ENCODE measurements at regions of chr3 and their contacts with region 1.

Region 1: DNA sequence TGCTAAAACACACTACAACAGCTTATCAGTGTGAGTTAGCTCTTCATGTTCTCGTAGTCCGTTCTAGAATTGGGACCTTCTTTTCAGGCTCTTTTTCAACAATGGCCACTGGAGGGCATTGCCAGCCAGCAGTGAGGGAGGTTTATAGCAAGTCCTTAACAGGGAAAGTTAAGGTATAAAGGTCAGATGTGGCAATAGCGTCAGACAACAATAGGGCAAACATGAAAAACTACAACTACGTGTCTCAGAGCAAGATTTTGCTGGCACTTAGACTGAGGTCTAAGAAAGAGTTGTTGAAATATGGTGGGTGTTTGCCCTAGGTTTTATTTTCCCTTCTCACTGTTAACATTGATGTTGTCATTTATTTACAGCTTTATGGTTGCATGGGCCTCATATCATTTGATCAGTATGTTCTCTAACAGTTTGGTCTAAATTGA is 161.4 kb downstream of the GMNC start:
- DNase-seq: peak; percentile 65 to 81
- H3K4me3 ChIP-seq: no peak overlapping the region
- H3K27ac ChIP-seq: no peak overlapping the region
- H3K4me1 ChIP-seq: peaks cover 21% of the 10 kb centered on the region; the same call in 1 of the 2 replicates
- H3K27me3 ChIP-seq: no peaks in the 10 kb centered on the region
- CTCF ChIP-seq: peak; percentile 87

Region 2: DNA sequence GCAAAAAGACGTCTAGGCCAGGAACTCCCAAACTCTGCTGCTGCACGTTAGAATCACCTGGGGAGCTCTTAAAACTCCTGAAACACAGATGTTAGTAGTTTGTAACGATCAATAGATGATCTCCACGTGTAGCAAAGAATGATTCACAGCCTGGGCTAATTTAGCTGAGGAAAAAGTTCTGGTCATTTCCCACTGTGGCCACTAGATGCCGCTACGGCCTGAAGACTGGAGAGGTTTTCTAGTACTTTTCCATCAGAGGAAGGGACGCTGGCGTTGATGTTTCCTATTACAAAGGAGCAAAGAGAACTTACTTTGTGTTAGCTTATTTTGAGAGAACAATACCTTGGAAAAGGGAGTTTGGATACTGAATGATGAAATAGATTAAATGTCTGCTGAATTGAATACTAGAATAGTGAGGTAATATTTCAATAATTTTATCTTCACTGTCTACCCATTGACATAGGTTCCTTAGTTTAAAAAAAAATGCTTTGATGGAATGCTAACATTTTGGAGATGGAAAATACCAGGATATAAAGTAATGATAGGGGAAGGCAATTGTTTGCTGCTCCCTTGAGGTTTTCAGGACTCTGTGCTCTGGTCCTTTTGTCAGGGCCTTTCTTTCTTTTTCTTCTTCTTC is 739.5 kb before region 1 on chr3:
- CTCF ChIA-PET with region 1: interaction called, 5 read pairs
- POLR2A ChIA-PET with region 1: no interaction called
- intact Hi-C with region 1: loop called (anchors 1 kb)
- DNase-seq: peak; percentile 79 to 85
- H3K4me3 ChIP-seq: no peak overlapping the region
- H3K27ac ChIP-seq: no peak overlapping the region
- H3K4me1 ChIP-seq: peaks cover 7% of the 10 kb centered on the region
- H3K27me3 ChIP-seq: no peaks in the 10 kb centered on the region
- CTCF ChIP-seq: peak; percentile 100

Region 3: GRCh38 chr3:190424478-190425439 is 276.4 kb before region 1 on chr3:
- CTCF ChIA-PET with region 1: interaction called, 10 read pairs
- POLR2A ChIA-PET with region 1: no interaction called
- intact Hi-C with region 1: loop called (anchors 2 kb)
- DNase-seq: peak; percentile 70 to 73
- H3K4me3 ChIP-seq: no peak overlapping the region
- H3K27ac ChIP-seq: no peak overlapping the region
- H3K4me1 ChIP-seq: no peaks in the 10 kb centered on the region
- H3K27me3 ChIP-seq: no peaks in the 10 kb centered on the region
- CTCF ChIP-seq: peak; percentile 95

Region 4: GRCh38 chr3:190566043-190566933 is 134.8 kb before region 1 on chr3:
- CTCF ChIA-PET with region 1: no interaction called
- POLR2A ChIA-PET with region 1: interaction called, 5 read pairs
- intact Hi-C with region 1: loop called (anchors 1 kb)
- DNase-seq: peak; percentile 94 to 100
- H3K4me3 ChIP-seq: no peak overlapping the region
- H3K27ac ChIP-seq: peak overlapping the region; percentile 82
- H3K4me1 ChIP-seq: peaks cover 33% of the 10 kb centered on the region
- H3K27me3 ChIP-seq: no peaks in the 10 kb centered on the region
- CTCF ChIP-seq: no peak

Region 5: DNA sequence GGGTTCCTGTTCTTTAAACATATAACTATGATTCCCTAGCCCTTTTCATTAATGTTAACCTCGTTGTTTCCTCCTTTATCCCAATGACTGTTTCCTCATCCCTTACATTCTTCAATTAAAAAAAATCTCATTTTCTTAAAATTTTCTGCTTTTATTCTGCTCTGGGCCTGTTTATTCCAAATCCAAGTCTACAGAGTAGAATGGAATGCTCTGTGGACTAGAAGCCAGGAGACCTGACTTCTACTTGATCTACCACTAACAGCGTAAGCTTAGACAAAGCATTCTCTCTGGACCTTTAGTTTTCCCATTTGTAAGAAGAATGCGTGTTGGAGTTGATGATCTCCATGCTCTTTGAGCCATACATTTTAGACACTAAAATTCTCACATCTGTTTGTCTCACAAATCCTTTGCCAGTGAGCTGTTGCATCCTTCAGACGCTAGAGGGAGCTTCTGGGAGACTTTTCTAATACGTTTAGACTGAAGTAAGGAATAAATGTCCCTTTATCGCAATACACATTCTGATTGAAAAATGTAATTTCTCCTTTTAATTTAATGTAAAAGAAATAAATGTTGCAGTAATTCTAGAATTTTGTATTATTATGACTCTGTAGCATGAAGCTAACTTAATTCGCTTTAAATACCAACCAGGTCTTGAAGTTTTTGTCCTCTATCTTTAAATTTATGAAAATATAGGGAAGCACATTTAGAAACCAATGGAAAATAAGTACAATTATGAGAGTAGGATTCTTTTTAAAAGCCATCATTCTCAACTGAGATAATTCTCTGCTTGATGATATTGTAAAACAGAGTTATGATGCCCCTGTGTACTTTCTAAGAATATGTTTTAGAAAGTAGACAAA is 183.1 kb after region 1 on chr3:
- CTCF ChIA-PET with region 1: interaction called, 6 read pairs
- POLR2A ChIA-PET with region 1: no interaction called
- intact Hi-C with region 1: loop called (anchors 5 kb)
- DNase-seq: peak; percentile 48 to 50
- H3K4me3 ChIP-seq: no peak overlapping the region
- H3K27ac ChIP-seq: no peak overlapping the region
- H3K4me1 ChIP-seq: no peaks in the 10 kb centered on the region
- H3K27me3 ChIP-seq: no peaks in the 10 kb centered on the region
- CTCF ChIP-seq: peak; percentile 97

Region 6: GRCh38 chr3:191388823-191389222 is 687.7 kb after region 1 on chr3:
- CTCF ChIA-PET with region 1: no interaction called
- POLR2A ChIA-PET with region 1: no interaction called
- intact Hi-C with region 1: loop called (anchors 10 kb)
- DNase-seq: no peak
- H3K4me3 ChIP-seq: no peak overlapping the region
- H3K27ac ChIP-seq: no peak overlapping the region
- H3K4me1 ChIP-seq: no peaks in the 10 kb centered on the region
- H3K27me3 ChIP-seq: no peaks in the 10 kb centered on the region
- CTCF ChIP-seq: peak; percentile 61